ENCODE measurements at regions of chrX and their contacts with region 1.

Region 1: DNA sequence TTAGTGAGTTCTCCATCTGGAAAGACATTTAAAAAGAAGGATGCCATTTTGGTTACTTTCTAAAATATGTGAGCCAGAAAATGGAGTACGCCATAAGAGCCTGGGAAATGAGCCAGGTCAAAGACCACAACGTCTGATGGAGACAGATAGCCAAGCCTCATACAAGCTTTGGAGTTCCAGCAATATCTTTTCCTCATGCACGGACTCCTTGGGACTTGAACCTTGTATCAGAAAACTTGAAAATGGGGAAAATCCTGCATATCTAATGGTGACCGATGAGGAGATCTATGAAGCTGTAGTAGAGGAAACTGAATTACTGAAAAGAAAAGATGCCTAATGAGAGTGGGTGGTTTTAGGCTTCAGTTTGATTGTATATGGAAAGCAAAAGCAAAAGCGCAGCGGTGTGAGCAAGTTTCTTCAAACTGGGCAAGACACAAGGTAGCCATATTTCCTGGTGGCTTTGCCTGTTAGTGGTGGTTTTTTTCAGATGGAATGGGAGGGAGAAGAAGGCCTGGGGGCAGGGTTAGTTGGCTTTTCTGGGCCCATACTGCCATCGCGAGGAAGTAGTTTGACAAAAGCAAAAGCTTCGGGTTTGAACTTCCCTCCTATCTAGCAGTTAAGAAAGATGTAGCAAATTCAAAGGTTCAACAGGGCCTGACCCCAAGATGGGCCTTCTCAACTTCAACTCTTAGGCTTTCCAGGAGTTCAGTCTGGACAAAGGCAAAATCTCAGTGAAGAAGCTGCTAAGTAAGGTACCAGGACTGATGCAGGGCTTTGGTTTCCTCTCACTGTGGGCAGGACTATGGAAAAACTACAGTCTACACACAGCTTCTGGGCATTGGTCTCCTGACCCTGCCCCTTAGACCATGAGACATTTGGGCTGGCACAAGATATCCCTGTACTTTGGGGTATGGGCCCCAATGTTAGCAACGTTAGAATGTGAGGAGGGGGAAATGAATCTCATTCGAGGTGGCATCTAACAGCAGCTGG is 210.0 kb upstream of the STK26 start:
- DNase-seq: peak in 1 of 2 donors; percentile 53
- ATAC-seq: peak; percentile 88 to 96 (median 92)
- H3K4me3 ChIP-seq: peak overlapping the region in 9 of 10 donors; percentile 21 to 60 (median 47)
- H3K27ac ChIP-seq: peak overlapping the region; percentile 28 to 91 (median 76)
- H3K4me1 ChIP-seq: peaks cover 0 to 33% (median 0%) of the 10 kb centered on the region in 9 donors
- H3K27me3 ChIP-seq: peaks cover 0 to 7% (median 0%) of the 10 kb centered on the region in 7 donors
- CTCF ChIP-seq: peak in 7 of 9 donors; percentile 18 to 68 (median 46)

Region 2: DNA sequence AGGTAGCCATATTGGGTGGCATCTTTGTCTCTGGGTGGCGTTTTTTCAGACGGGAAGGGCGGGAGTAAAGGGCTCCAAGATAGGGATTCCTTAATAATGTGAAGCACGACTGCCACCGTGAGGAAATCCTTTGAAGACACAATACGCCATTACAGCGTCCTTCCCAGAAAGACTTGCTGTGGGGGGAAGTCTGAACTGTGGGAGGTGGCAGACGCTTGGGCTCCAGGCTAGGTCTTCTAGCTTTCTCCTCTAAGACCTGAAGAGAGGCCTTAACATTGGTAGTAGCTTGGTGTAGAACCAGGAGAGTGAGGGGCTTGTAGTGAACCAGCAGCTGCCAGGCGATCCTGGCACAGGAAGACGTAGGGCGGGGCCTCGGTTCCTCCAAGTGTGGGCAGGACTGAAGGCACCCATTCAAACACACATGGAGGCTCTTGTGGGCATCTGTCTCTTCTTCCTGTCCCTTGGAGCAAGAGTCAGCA is 72.0 kb before region 1 on chrX:
- intact Hi-C with region 1: loop called in 2 of 10 experiments (anchors 5 to 10 kb)
- DNase-seq: no peak
- ATAC-seq: peak in 3 of 8 donors; percentile 88 to 95 (median 92)
- H3K4me3 ChIP-seq: peak overlapping the region in 3 of 10 donors; percentile 35 to 56 (median 45)
- H3K27ac ChIP-seq: peak overlapping the region in 3 of 10 donors; percentile 82 to 93 (median 88)
- H3K4me1 ChIP-seq: peaks cover 0 to 12% (median 0%) of the 10 kb centered on the region in 9 donors
- H3K27me3 ChIP-seq: no peaks in the 10 kb centered on the region
- CTCF ChIP-seq: peak in 2 of 9 donors; percentile 40

Region 3: GRCh38 chrX:131746474-131746968 is 66.6 kb before region 1 on chrX:
- intact Hi-C with region 1: loop called in 2 of 10 experiments (anchors 5 to 10 kb)
- DNase-seq: peak; percentile 8 to 13
- ATAC-seq: peak in 5 of 8 donors; percentile 21 to 89 (median 77)
- H3K4me3 ChIP-seq: peak overlapping the region in 6 of 10 donors; percentile 14 to 55 (median 33)
- H3K27ac ChIP-seq: peak overlapping the region in 6 of 10 donors; percentile 10 to 93 (median 60)
- H3K4me1 ChIP-seq: no peaks in the 10 kb centered on the region
- H3K27me3 ChIP-seq: no peaks in the 10 kb centered on the region
- CTCF ChIP-seq: peak in 3 of 9 donors; percentile 7 to 44 (median 35)

Region 4: GRCh38 chrX:131792789-131793462 is 20.2 kb before region 1 on chrX:
- intact Hi-C with region 1: loop called in 1 of 10 experiments (anchors 2 kb)
- DNase-seq: peak; percentile 17 to 61
- ATAC-seq: peak; percentile 55 to 98 (median 84)
- H3K4me3 ChIP-seq: peak overlapping the region in 9 of 10 donors; percentile 19 to 53 (median 30)
- H3K27ac ChIP-seq: peak overlapping the region in 8 of 10 donors; percentile 19 to 86 (median 56)
- H3K4me1 ChIP-seq: peaks cover 0 to 6% (median 0%) of the 10 kb centered on the region in 9 donors
- H3K27me3 ChIP-seq: peaks cover 0 to 60% (median 0%) of the 10 kb centered on the region in 7 donors
- CTCF ChIP-seq: peak in 5 of 9 donors; percentile 16 to 57 (median 36)

Region 5: GRCh38 chrX:132226169-132226568 is 413.0 kb after region 1 on chrX:
- intact Hi-C with region 1: no loop called
- DNase-seq: no peak
- ATAC-seq: no peak
- H3K4me3 ChIP-seq: no peak overlapping the region
- H3K27ac ChIP-seq: no peak overlapping the region
- H3K4me1 ChIP-seq: no peaks in the 10 kb centered on the region
- H3K27me3 ChIP-seq: peaks cover 0 to 10% (median 0%) of the 10 kb centered on the region in 7 donors
- CTCF ChIP-seq: peak in 7 of 9 donors; percentile 11 to 47 (median 39)